Calu3 (cell line): ENCODE measurements at regions of chr5 and their contacts with region 1.

Region 1: GRCh38 chr5:106454651-106455415 is 1215.9 kb downstream of the EFNA5 start:
- DNase-seq: peak; percentile 41
- H3K4me3 Mint-ChIP-seq: no peak overlapping the region
- H3K27ac Mint-ChIP-seq: peak overlapping the region; percentile 50
- H3K4me1 Mint-ChIP-seq: peaks cover 15% of the 10 kb centered on the region
- H3K27me3 Mint-ChIP-seq: no peaks in the 10 kb centered on the region
- CTCF ChIP-seq: peak; percentile 72

Region 2: DNA sequence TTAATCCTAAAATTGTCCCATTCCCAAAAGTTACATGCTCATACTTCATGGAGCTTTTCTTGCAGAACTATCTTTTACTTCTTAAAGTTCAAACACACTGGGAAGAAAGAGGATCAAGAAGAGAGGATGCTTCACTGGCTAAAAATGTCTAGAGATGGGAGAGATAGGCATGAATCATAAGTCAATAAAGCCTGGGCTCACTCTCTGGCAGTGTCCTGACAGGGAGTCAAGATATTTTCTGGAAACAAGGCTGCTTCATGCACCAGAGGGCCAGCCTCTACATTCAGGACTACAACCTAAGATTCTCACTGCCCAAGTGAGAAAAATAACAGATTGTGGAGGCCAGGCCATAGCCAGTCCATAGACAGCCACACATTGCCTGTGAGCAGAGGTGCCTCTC is 142.5 kb before region 1 on chr5:
- CTCF ChIA-PET with region 1: no interaction called
- intact Hi-C with region 1: no loop called
- DNase-seq: no peak
- H3K4me3 Mint-ChIP-seq: no peak overlapping the region
- H3K27ac Mint-ChIP-seq: no peak overlapping the region
- H3K4me1 Mint-ChIP-seq: no peaks in the 10 kb centered on the region
- H3K27me3 Mint-ChIP-seq: no peaks in the 10 kb centered on the region
- CTCF ChIP-seq: no peak

Region 3: DNA sequence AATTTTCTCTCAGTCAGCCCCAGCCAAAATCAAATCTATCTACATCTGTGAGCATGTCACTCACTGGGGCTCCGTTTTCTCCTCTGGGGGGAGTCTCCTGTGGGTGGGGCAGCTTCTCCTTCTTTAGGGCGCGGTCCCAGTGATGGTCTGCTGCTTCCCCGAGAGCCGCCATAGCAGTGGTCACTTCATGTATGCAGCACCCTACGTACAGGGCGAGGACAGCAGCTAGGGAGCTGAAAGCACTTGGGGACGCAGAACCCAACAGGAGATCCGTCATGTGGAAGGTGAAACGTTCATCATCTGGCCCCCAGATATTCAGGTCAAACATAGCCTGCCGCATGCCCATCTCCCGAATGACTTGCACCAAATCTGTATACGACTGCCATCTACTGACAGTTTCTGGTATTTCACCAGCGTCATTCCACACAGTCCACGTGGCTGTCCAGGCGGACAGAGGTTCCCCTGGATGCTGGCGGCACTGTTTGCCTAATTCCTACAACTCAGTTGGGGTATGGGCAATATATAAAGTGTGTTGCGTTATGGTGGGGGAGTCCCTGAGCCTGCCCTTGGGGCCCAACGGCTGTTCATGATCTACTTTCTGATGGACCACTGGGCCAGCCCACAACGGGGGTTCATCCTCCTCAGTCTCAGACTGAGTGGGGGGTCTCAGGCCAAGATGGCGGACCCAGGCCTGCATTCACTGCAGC is 420.9 kb after region 1 on chr5:
- CTCF ChIA-PET with region 1: interaction called, 4 read pairs
- intact Hi-C with region 1: loop called (anchors 10 kb)
- DNase-seq: peak; percentile 57
- H3K4me3 Mint-ChIP-seq: no peak overlapping the region
- H3K27ac Mint-ChIP-seq: no peak overlapping the region
- H3K4me1 Mint-ChIP-seq: peaks cover 27% of the 10 kb centered on the region
- H3K27me3 Mint-ChIP-seq: no peaks in the 10 kb centered on the region
- CTCF ChIP-seq: peak; percentile 50